WTC11 (cell line): ENCODE measurements at regions of chr5 and their contacts with region 1.

Region 1: DNA sequence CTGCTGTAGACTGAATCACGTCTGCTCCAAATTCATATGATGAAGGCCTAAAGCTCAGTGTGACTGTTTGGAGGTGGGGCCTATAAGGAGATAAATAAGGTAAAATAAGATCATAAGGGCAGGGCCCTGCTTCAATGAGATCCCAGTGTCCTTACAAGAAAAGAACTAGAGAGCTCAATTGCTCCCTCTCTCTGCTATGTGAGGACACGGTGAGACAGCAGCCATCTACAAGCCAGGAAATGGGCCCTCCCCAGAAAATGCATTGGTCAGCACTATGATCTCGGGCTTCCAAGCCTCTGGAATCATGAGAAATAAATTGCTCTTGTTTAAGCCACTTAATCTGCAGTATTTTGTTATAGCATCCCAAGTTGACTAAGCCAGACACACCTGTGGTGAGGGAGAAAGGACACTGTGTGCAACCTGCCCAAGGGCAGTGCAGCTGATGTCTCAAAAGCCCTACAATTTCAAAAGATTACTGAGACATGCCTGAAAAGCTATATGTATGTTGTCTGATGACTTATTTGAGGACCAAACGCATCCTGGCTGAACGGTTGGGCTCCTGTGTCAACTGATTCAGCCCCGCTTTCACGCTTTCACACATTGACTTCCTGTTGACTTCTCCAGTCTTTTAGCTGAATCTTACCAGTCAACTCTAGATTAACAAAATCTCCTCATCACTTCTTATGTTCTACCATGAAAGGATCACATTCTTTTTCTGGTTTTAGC is 13.2 kb downstream of the GZMK start:
- DNase-seq: peak; percentile 31
- ATAC-seq: peak; percentile 100
- H3K4me3 Mint-ChIP-seq: no peak overlapping the region
- H3K27ac Mint-ChIP-seq: no peak overlapping the region
- H3K4me1 Mint-ChIP-seq: peaks cover 20% of the 10 kb centered on the region
- H3K27me3 Mint-ChIP-seq: no peaks in the 10 kb centered on the region
- CTCF ChIP-seq: no peak

Region 2: GRCh38 chr5:54719384-54720283 is 317.6 kb before region 1 on chr5:
- CTCF ChIA-PET with region 1: no interaction called
- POLR2A ChIA-PET with region 1: no interaction called
- DNase-seq: peak; percentile 77
- ATAC-seq: peak; percentile 89
- H3K4me3 Mint-ChIP-seq: no peak overlapping the region
- H3K27ac Mint-ChIP-seq: peak overlapping the region; percentile 54
- H3K4me1 Mint-ChIP-seq: peaks cover 15% of the 10 kb centered on the region
- H3K27me3 Mint-ChIP-seq: no peaks in the 10 kb centered on the region
- CTCF ChIP-seq: no peak

Region 3: DNA sequence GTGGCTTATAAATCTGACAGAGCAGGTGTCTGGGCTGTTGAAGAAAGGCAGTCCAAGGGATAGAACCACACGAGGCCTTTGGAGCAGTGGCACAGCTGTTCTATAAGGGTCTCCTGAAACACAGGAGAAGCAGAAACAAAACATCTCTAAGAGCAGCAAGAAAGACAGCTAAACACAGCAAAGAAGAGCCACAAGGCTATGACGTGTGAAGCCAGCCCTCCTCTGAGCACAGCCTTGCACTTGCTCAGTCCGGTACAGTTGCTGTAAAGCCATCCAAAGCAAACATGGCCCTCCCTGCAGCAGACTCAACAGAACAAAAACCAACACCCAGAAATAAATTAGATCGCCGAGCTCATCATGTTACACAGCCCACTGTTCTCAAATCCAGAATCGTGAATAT is 15.8 kb before region 1 on chr5:
- CTCF ChIA-PET with region 1: interaction called, 10 read pairs
- POLR2A ChIA-PET with region 1: no interaction called
- DNase-seq: no peak
- ATAC-seq: peak; percentile 36; the same call in 1 of the 2 replicates
- H3K4me3 Mint-ChIP-seq: no peak overlapping the region
- H3K27ac Mint-ChIP-seq: no peak overlapping the region
- H3K4me1 Mint-ChIP-seq: peaks cover 7% of the 10 kb centered on the region
- H3K27me3 Mint-ChIP-seq: peaks cover 1% of the 10 kb centered on the region; the same call in 1 of the 2 replicates
- CTCF ChIP-seq: no peak